Thyroid gland (tissue), 4 donors: ENCODE measurements at regions of chr19 and their contacts with region 1.

Region 1: DNA sequence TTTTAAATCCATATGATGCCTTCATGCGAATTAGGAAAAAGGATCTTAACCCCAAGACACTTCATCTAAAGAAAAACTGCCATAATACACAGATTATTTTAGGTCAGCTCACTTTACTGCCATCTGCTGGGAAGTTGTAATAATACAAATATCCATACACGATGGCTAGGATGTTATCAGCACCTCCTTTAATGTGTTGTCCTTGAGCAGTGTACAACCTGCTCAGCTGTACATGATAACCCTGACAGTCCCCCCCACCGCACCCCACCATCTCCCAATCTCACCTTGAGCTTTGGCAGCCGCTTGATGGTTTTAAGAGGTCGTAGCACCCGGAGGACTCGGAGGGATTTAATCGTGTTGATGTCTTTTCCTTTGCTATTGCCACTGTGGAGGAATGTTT is 112.2 kb downstream of the IER2 start:
- DNase-seq: no peak
- H3K4me3 ChIP-seq: no peak overlapping the region
- H3K27ac ChIP-seq: no peak overlapping the region
- H3K4me1 ChIP-seq: no peaks in the 10 kb centered on the region
- H3K27me3 ChIP-seq: no peaks in the 10 kb centered on the region
- CTCF ChIP-seq: peak; percentile 31 to 69 (median 42)
- POLR2A ChIP-seq: no peak

Region 2: GRCh38 chr19:12974301-12975220 is 287.9 kb before region 1 on chr19:
- intact Hi-C with region 1: loop called (anchors 10 kb)
- DNase-seq: peak in 1 of 2 donors; percentile 36
- H3K4me3 ChIP-seq: no peak overlapping the region
- H3K27ac ChIP-seq: peak overlapping the region in 1 of 3 donors; percentile 43
- H3K4me1 ChIP-seq: peaks cover 3 to 4% of the 10 kb centered on the region in 2 donors
- H3K27me3 ChIP-seq: no peaks in the 10 kb centered on the region
- CTCF ChIP-seq: no peak
- POLR2A ChIP-seq: no peak

Region 3: DNA sequence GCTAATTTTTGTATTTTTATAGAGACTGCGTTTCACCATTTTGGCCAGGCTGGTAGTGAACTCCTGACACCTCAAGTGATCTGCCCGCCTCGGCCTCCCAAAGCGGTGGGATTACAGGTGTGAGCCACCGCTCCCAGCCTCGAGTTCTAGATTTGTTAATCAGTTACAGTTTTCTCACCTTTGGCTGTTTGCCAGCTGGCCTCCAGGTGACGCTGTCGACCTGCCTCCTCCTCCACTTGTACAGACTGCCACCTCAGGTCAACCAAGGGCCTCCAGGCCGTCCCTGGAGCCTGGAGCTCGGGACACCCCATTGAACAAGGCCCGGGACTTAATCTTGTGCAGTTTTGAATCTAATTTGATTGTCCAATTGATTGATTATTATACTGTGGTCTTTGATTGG is 66.8 kb before region 1 on chr19:
- intact Hi-C with region 1: loop called (anchors 10 kb)
- DNase-seq: peak; percentile 26 to 34
- H3K4me3 ChIP-seq: no peak overlapping the region
- H3K27ac ChIP-seq: no peak overlapping the region
- H3K4me1 ChIP-seq: no peaks in the 10 kb centered on the region
- H3K27me3 ChIP-seq: no peaks in the 10 kb centered on the region
- CTCF ChIP-seq: no peak
- POLR2A ChIP-seq: no peak